Heart left ventricle (tissue), 16 donors: ENCODE measurements at regions of chr20 and their contacts with region 1.

Region 1: GRCh38 chr20:25399037-25399430 is 8.4 kb upstream of the ABHD12 start:
- DNase-seq: peak in 1 of 5 donors; percentile 29
- ATAC-seq: peak in 3 of 4 donors; percentile 84 to 88 (median 86)
- H3K4me3 ChIP-seq: no peak overlapping the region
- H3K27ac ChIP-seq: no peak overlapping the region
- H3K4me1 ChIP-seq: peaks cover 0 to 8% (median 0%) of the 10 kb centered on the region in 12 donors
- H3K27me3 ChIP-seq: no peaks in the 10 kb centered on the region
- CTCF ChIP-seq: peak; percentile 45 to 75 (median 63)
- POLR2A ChIP-seq: no peak

Region 2: DNA sequence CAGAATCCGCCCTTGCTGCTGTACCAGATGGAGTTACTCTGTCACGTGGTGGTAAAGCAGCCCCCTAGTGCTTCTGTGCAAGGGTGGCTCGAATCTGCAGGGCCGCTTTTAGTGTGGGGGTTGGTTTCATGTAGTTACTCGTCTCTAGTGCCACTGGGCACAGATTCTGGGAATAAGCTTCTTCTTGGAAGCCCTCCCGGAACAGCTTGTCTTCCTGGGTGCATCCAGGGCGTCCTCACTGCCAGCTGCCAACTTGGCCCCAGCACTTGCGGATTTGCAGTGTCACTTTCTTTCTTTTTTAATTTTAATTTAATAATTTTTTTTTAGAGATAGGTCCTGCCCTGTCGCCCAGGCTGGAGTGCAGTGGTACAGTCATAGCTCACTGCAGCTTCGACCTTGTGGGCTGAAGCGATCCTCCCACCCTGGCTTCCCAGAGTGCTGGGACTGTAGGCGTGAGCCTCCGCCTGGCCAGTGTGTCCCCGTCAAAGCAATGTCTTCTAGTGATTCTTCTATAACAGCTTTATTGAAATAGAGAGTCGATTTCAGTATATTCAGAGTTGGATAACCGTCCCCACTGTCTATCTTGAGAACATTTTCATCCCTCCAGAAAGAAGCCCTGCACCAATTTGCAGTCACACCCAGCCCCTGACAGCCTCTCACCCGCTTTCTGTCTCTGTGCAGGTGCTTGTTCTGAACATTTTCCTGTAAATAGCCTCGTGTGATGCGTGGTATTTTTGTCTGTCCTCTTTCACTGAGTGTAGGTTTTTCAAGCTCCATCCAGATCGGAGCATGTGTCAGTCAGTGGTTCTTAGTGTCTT is 125.3 kb before region 1 on chr20:
- intact Hi-C with region 1: no loop called
- DNase-seq: peak; percentile 8 to 50 (median 39)
- ATAC-seq: peak in 1 of 4 donors; percentile 33
- H3K4me3 ChIP-seq: no peak overlapping the region
- H3K27ac ChIP-seq: peak overlapping the region in 11 of 12 donors; percentile 29 to 75 (median 58)
- H3K4me1 ChIP-seq: peaks cover 0 to 77% (median 34%) of the 10 kb centered on the region in 12 donors
- H3K27me3 ChIP-seq: no peaks in the 10 kb centered on the region
- CTCF ChIP-seq: no peak
- POLR2A ChIP-seq: no peak

Region 3: GRCh38 chr20:25299806-25300205 is 99.2 kb before region 1 on chr20:
- intact Hi-C with region 1: loop called in 9 of 10 experiments (anchors 2 to 10 kb)
- DNase-seq: peak in 1 of 5 donors; percentile 29
- ATAC-seq: no peak
- H3K4me3 ChIP-seq: no peak overlapping the region
- H3K27ac ChIP-seq: no peak overlapping the region
- H3K4me1 ChIP-seq: peaks cover 9 to 33% (median 20%) of the 10 kb centered on the region in 12 donors
- H3K27me3 ChIP-seq: no peaks in the 10 kb centered on the region
- CTCF ChIP-seq: no peak
- POLR2A ChIP-seq: no peak

Region 4: GRCh38 chr20:25310268-25310920 is 88.6 kb before region 1 on chr20:
- intact Hi-C with region 1: loop called in 4 of 10 experiments (anchors 5 to 10 kb)
- DNase-seq: peak in 2 of 5 donors; percentile 48 to 65
- ATAC-seq: peak; percentile 79 to 86 (median 84)
- H3K4me3 ChIP-seq: peak overlapping the region in 6 of 12 donors; percentile 10 to 47 (median 26)
- H3K27ac ChIP-seq: peak overlapping the region in 10 of 12 donors; percentile 38 to 89 (median 70)
- H3K4me1 ChIP-seq: peaks cover 0 to 39% (median 24%) of the 10 kb centered on the region in 12 donors
- H3K27me3 ChIP-seq: no peaks in the 10 kb centered on the region
- CTCF ChIP-seq: peak in 9 of 12 donors; percentile 12 to 54 (median 33)
- POLR2A ChIP-seq: no peak

Region 5: DNA sequence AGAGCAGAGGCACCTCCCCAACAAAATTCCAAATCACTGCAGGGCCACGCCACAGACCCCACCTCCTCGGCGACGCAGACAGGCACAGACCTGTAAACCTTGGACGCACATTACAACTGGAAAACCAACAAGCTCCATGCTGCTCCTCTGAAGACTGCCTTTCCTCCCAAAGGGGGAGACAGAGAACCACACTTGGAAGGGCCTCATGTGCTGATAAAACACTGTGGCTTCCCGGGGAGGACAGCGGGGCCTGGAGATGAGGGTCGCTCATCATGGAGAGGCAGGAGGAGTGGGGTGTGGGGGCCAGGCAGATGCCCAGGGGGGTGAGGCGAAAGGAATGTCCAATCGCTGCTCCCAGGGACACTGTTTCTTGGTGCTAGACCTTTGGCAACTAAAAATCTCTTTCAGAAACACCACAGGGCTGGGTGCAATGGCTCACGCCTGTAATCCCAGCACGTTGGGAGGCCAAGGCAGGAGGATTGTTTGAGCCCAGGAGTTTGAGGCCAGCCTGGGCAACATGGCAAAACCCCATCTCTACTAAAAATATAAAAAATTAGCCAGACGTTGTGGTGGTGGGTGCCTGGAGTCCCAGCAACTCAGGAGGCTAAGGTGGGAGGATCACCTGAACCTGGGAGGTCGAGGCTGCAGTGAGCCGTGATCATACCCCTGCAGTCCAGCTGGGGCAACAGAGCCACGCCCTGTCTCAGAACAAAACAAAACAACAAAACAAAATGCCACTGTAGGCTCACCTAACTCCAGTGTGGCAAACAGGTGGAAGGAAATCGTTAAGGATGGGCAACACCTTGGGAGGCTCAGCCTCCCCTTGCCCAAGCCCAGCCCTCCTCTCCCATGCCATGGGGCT is 62.2 kb before region 1 on chr20:
- intact Hi-C with region 1: loop called in 1 of 10 experiments (anchors 5 kb)
- DNase-seq: no peak
- ATAC-seq: peak; percentile 71 to 81 (median 74)
- H3K4me3 ChIP-seq: no peak overlapping the region
- H3K27ac ChIP-seq: no peak overlapping the region
- H3K4me1 ChIP-seq: peaks cover 0 to 11% (median 0%) of the 10 kb centered on the region in 12 donors
- H3K27me3 ChIP-seq: no peaks in the 10 kb centered on the region
- CTCF ChIP-seq: peak in 10 of 12 donors; percentile 14 to 43 (median 34)
- POLR2A ChIP-seq: no peak

Region 6: GRCh38 chr20:25437153-25437581 is 38.1 kb after region 1 on chr20:
- intact Hi-C with region 1: no loop called
- DNase-seq: no peak
- ATAC-seq: peak in 2 of 4 donors; percentile 27 to 57
- H3K4me3 ChIP-seq: no peak overlapping the region
- H3K27ac ChIP-seq: no peak overlapping the region
- H3K4me1 ChIP-seq: peaks cover 0 to 4% (median 0%) of the 10 kb centered on the region in 12 donors
- H3K27me3 ChIP-seq: no peaks in the 10 kb centered on the region
- CTCF ChIP-seq: no peak
- POLR2A ChIP-seq: no peak